ENCODE measurements at regions of chr7 and their contacts with region 1.

Region 1: DNA sequence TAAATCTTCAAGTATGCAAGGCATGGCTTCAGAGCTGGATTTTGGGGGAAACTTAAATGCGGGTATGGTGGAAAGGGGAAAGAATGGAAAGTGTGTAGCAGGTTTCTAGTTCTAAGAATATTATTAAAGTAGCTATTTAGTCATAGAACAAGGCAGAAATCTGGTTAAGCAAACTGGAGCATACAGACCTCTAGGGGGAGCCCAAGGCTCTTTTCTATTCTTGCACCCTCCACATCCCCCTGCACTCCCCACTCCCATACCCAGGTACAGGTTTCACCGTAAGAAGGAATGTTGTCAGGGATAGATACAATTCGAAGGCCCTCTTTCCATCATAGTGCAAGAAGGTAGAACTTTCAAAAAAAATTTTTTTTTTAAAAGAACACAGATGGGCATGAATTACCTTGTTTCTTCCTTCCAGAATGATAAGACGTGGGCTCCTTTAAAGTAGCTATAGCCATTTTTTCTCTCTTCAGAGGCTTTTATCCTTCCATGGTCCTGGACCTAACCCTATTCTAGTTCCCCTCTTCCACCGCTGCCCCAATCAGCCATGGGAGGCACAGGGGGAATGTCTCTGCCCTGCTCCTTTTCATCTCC is 41.5 kb upstream of the SMIM30 start:
- DNase-seq: peak; percentile 54
- H3K4me3 Mint-ChIP-seq: no peak overlapping the region
- H3K27ac Mint-ChIP-seq: no peak overlapping the region
- H3K4me1 Mint-ChIP-seq: no peaks in the 10 kb centered on the region
- H3K27me3 Mint-ChIP-seq: no peaks in the 10 kb centered on the region
- CTCF ChIP-seq: peak; percentile 78

Region 2: DNA sequence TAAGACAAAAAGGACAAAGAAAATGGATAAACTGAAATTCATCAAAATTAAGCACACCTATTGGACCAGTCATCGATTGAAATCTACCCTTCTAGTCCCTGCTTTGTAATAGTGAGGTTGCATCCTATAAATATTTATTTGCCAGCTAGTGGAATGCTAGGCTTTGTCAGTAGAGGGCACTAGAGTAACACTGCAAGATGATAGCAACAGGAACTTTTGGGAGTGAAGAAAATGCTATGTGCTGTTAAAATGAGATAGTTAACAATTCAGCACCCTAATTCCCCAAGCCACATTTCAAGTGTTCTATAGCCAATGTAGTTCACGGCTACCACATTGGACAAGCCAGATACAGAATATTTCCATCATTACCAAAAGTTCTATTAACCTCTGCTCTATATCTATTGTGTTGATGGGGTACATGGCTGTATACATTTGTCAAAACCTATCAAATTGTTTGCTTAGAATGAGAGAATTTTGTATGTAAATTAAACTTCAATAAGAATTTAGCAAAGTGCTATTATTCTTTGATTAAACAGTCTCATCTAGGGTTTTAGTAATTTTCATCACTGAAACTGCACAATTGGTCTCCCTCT is 609.3 kb before region 1 on chr7:
- CTCF ChIA-PET with region 1: interaction called, 3 read pairs
- POLR2A ChIA-PET with region 1: no interaction called
- intact Hi-C with region 1: loop called (anchors 1 kb)
- DNase-seq: peak; percentile 72
- H3K4me3 Mint-ChIP-seq: no peak overlapping the region
- H3K27ac Mint-ChIP-seq: no peak overlapping the region
- H3K4me1 Mint-ChIP-seq: no peaks in the 10 kb centered on the region
- H3K27me3 Mint-ChIP-seq: no peaks in the 10 kb centered on the region
- CTCF ChIP-seq: peak; percentile 95

Region 3: DNA sequence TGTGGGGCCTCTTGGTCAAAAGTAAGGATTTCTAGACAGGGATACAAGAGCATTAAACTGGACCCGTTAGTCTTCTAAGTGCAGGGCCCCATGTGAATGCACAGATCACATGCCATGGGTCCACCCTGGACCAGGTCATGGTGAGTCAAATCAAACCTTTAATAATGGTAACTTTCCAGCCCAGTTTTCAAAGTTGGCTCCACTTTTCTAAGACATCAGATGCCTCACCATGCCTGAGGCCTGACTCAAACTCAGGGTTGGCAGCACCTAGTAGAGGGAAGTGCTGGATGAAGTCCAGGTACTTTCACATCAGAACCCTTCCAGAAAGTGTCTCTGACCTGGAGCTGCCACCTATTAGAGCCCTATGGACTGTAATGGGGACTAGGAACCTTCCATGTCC is 31.8 kb before region 1 on chr7:
- CTCF ChIA-PET with region 1: interaction called, 14 read pairs
- POLR2A ChIA-PET with region 1: no interaction called
- intact Hi-C with region 1: no loop called
- DNase-seq: peak; percentile 46
- H3K4me3 Mint-ChIP-seq: no peak overlapping the region
- H3K27ac Mint-ChIP-seq: no peak overlapping the region
- H3K4me1 Mint-ChIP-seq: no peaks in the 10 kb centered on the region
- H3K27me3 Mint-ChIP-seq: no peaks in the 10 kb centered on the region
- CTCF ChIP-seq: no peak

Region 4: DNA sequence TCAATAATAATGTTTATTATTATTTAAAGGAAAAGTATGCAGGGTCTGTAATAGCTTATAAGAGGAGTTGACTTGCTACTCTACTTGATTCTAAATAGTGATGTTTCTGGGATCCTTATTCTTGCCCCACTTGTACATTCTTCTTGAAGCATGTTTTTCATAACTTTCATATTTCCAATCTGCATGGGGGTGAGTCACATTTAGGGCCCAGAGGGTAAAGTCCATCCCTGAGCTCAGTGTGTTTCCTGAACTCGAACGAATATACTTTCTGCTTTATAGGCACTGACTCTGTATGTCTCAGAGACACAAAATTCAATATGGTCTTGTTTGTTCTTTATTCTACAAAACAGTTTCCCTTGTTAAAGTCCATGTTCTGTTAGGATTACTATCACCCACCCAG is 19.5 kb after region 1 on chr7:
- CTCF ChIA-PET with region 1: interaction called, 43 read pairs
- POLR2A ChIA-PET with region 1: no interaction called
- intact Hi-C with region 1: no loop called
- DNase-seq: no peak
- H3K4me3 Mint-ChIP-seq: no peak overlapping the region
- H3K27ac Mint-ChIP-seq: no peak overlapping the region
- H3K4me1 Mint-ChIP-seq: no peaks in the 10 kb centered on the region
- H3K27me3 Mint-ChIP-seq: no peaks in the 10 kb centered on the region
- CTCF ChIP-seq: no peak

Region 5: GRCh38 chr7:113421696-113422330 is 262.0 kb after region 1 on chr7:
- CTCF ChIA-PET with region 1: interaction called, 61 read pairs
- POLR2A ChIA-PET with region 1: no interaction called
- intact Hi-C with region 1: loop called (anchors 1 kb)
- DNase-seq: peak; percentile 88
- H3K4me3 Mint-ChIP-seq: no peak overlapping the region
- H3K27ac Mint-ChIP-seq: no peak overlapping the region
- H3K4me1 Mint-ChIP-seq: peaks cover 5% of the 10 kb centered on the region
- H3K27me3 Mint-ChIP-seq: no peaks in the 10 kb centered on the region
- CTCF ChIP-seq: peak; percentile 89

Region 6: DNA sequence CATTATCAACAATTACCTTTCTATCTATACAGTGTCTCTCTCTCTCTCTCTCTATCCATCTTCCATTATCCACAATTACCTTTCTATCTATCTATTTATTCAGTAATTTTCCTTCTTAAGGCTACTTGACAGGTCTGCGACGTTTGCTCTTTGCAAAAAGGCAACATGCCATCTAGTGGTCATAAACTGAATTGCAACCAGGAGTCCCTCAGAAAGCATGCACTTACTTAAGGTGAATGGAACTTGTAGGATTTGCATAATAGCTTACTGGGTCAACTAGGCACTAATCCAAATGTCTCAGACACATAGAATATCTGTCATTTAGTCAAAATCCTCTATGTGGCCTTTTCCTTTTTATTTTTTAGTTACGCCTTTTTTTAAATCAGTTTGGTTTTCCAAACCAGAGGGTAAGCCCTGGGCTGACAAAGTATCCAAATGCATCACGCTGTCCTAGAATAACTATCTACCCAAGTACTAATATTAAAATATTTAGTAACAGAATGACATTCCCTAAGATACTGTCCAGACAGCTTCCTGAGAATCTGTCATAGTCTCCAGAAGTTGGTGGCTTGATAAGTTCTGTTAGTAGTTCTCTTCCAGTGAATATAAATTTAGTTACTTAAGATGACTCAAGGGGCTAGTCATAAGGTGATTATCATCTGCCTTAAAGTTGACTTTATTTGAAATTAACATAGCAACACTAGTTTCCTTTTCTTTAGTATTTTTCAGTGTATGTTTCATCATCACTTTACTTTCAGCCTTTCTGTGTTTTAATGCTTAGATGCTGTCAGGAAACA is 550.7 kb after region 1 on chr7:
- CTCF ChIA-PET with region 1: interaction called, 9 read pairs
- POLR2A ChIA-PET with region 1: no interaction called
- intact Hi-C with region 1: loop called (anchors 5 kb)
- DNase-seq: peak; percentile 84
- H3K4me3 Mint-ChIP-seq: no peak overlapping the region
- H3K27ac Mint-ChIP-seq: no peak overlapping the region
- H3K4me1 Mint-ChIP-seq: peaks cover under 1% of the 10 kb centered on the region
- H3K27me3 Mint-ChIP-seq: no peaks in the 10 kb centered on the region
- CTCF ChIP-seq: peak; percentile 90

Region 7: DNA sequence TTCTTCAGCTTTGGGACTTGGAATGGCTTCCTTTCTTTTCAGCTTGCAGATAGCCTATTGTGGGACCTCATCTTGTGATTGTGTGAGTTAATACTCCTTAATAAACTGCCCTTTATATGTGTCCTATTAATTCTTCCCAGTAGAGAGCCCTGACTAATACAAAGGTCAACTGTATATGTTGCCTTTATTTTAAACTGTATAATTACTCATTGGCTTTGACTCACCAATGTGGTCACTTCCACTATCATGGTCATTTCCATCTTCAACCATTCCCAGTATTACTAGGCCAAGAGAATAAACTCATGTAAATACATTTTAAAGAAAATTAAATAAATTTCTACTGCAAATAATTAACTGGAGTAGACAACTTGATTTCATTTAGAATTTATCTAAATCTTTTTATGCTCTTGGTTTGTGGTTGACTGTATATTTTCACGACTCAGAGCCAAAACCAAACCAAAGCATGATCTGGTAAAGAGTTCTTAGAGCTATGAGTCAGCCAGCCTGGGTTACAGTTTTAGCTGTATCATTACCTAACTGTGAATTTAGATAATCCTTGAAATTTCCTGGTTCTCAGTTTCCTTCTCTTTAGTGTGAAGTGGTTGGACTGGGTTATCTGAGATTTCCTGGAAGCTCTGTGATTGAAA is 570.6 kb after region 1 on chr7:
- CTCF ChIA-PET with region 1: no interaction called
- POLR2A ChIA-PET with region 1: no interaction called
- intact Hi-C with region 1: no loop called
- DNase-seq: peak; percentile 46
- H3K4me3 Mint-ChIP-seq: no peak overlapping the region
- H3K27ac Mint-ChIP-seq: no peak overlapping the region
- H3K4me1 Mint-ChIP-seq: peaks cover 18% of the 10 kb centered on the region
- H3K27me3 Mint-ChIP-seq: peaks cover under 1% of the 10 kb centered on the region
- CTCF ChIP-seq: no peak

Measured in MCF 10A (cell line).